H1 (cell line): ENCODE measurements at regions of chr10 and their contacts with region 1.

Region 1: GRCh38 chr10:23314835-23315239 is 29.8 kb downstream of the C10orf67 start:
- DNase-seq: no peak
- H3K4me3 ChIP-seq: no peak overlapping the region
- H3K27ac ChIP-seq: no peak overlapping the region
- H3K4me1 ChIP-seq: no peaks in the 10 kb centered on the region
- H3K27me3 ChIP-seq: no peaks in the 10 kb centered on the region
- CTCF ChIP-seq: peak in 2 of 3 experiments; percentile 47 to 59; a peak in 2 of 4 replicates
- EP300 ChIP-seq: no peak
- POLR2A ChIP-seq: no peak
- RAD21 ChIP-seq: peak; percentile 71 to 72

Region 2: GRCh38 chr10:23325132-23325531 is 10.3 kb after region 1 on chr10:
- CTCF ChIA-PET with region 1: interaction called, 19 read pairs
- POLR2A ChIA-PET with region 1: no interaction called
- DNase-seq: no peak
- H3K4me3 ChIP-seq: no peak overlapping the region
- H3K27ac ChIP-seq: no peak overlapping the region
- H3K4me1 ChIP-seq: no peaks in the 10 kb centered on the region
- H3K27me3 ChIP-seq: no peaks in the 10 kb centered on the region
- CTCF ChIP-seq: peak in 1 of 3 experiments; percentile 5; a peak in 1 of 4 replicates
- EP300 ChIP-seq: no peak
- POLR2A ChIP-seq: no peak
- RAD21 ChIP-seq: peak in 1 of 2 experiments; percentile 14; a peak in 1 of 4 replicates

Region 3: DNA sequence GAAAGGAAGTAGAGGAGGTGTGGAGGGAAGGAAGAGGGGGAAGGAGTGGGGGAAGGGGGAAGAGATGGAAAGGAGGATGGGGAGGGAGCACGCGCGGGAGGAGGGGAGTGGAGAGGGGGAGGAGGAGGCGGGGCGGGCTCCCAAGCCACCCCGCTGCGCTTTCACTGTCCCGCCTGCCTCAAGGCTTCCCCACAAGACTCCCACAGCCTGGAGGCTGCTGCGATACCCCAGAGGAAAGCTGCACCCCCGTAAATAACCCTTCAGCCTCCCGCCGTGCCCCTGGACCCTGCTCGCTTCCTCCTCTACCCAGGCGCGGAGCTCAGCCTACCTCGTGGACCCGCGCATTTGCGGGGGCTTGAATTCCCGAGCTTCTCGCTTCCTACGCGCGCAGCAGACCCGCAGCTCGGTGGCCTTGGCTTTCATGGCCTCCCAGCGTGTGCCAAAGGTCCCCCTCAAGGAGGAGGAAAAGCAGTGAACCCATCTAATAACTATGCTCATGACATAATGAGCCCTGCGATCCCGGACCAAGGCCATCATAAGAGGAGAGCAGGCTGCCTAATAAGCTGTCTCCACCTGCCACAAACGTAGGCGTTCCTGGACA is 29.5 kb after region 1 on chr10 and contains the start of gene C10orf67:
- CTCF ChIA-PET with region 1: interaction called, 18 read pairs
- POLR2A ChIA-PET with region 1: no interaction called
- DNase-seq: peak; percentile 17 to 70
- H3K4me3 ChIP-seq: peak within 1 kb of the TSS; percentile 65 to 98 (median 79)
- H3K27ac ChIP-seq: no peak within 1 kb of the TSS
- H3K4me1 ChIP-seq: peaks cover 2 to 9% (median 4%) of the 10 kb centered on the region in 4 experiments; a peak in 4 of 7 replicates
- H3K27me3 ChIP-seq: peaks cover 3 to 15% (median 6%) of the 10 kb centered on the region in 4 experiments; a peak in 5 of 7 replicates
- CTCF ChIP-seq: no peak
- EP300 ChIP-seq: no peak
- POLR2A ChIP-seq: no peak
- RAD21 ChIP-seq: no peak
- total RNA-seq, gene C10orf67: 0.11 TPM in 1 of 2 replicates, not detected in the other

Region 4: GRCh38 chr10:23525406-23525805 is 210.6 kb after region 1 on chr10:
- CTCF ChIA-PET with region 1: interaction called, 10 read pairs
- POLR2A ChIA-PET with region 1: no interaction called
- DNase-seq: no peak
- H3K4me3 ChIP-seq: no peak overlapping the region
- H3K27ac ChIP-seq: no peak overlapping the region
- H3K4me1 ChIP-seq: no peaks in the 10 kb centered on the region
- H3K27me3 ChIP-seq: no peaks in the 10 kb centered on the region
- CTCF ChIP-seq: peak in 2 of 3 experiments; percentile 34 to 41; a peak in 2 of 4 replicates
- EP300 ChIP-seq: no peak
- POLR2A ChIP-seq: no peak
- RAD21 ChIP-seq: peak; percentile 61 to 69

Region 5: GRCh38 chr10:23702977-23703414 is 388.2 kb after region 1 on chr10:
- CTCF ChIA-PET with region 1: interaction called, 27 read pairs
- POLR2A ChIA-PET with region 1: no interaction called
- DNase-seq: peak; percentile 64 to 68
- H3K4me3 ChIP-seq: no peak overlapping the region
- H3K27ac ChIP-seq: no peak overlapping the region
- H3K4me1 ChIP-seq: no peaks in the 10 kb centered on the region
- H3K27me3 ChIP-seq: peaks cover 0 to 2% (median 0%) of the 10 kb centered on the region in 4 experiments; a peak in 2 of 7 replicates
- CTCF ChIP-seq: peak; percentile 75 to 86 (median 83)
- EP300 ChIP-seq: no peak
- POLR2A ChIP-seq: no peak
- RAD21 ChIP-seq: peak; percentile 86 to 88